HEK293 (cell line): ENCODE measurements at regions of chr19 and their contacts with region 1.

Region 1: DNA sequence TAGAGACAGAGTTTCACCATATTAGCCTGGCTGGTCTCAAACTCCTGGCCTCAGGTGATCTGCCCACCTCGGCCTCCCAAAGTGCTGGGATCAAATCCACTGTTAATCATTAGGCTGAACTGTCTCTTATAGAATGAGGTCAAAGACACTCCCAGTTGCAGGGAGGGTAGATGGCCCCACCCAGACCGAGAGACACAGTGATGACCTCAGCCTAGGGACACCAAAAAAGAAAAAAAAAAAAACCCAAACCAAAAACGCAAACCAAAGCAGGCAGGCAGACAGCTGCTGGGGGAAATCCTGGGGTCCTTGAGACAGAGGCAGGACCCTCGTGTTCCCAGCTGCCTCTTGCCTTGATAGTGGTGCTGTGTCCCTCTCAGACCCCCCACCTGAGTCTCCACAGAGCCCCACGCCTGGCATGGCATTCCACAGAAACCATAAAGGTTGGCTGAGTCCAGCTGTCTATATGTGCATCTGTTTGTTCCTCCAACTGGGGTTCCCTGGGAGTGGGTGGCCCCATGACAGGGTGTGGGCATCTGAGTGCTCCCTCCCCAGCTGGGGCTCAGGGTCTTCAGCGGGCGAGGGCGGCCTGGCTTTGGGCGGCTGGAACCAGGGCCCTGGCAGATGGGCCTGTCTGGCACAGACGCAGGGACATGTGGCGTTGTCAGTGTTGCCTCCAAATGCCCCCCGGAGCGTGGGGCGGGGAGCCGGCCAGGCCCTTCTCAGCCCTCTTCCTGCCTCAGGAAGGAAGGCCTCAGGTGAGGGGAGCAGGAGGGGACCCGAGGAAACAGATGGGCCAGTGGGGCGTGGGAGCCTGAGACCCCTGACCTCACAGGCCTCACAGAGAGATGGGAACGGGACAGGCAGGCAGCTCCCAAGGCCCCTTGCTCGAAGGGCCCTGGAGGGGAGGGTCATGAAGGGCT is 5.2 kb downstream of the DAND5 start:
- H3K4me3 ChIP-seq: no peak overlapping the region
- H3K27ac ChIP-seq: no peak overlapping the region
- H3K4me1 ChIP-seq: no peaks in the 10 kb centered on the region
- CTCF ChIP-seq: no peak

Region 2: DNA sequence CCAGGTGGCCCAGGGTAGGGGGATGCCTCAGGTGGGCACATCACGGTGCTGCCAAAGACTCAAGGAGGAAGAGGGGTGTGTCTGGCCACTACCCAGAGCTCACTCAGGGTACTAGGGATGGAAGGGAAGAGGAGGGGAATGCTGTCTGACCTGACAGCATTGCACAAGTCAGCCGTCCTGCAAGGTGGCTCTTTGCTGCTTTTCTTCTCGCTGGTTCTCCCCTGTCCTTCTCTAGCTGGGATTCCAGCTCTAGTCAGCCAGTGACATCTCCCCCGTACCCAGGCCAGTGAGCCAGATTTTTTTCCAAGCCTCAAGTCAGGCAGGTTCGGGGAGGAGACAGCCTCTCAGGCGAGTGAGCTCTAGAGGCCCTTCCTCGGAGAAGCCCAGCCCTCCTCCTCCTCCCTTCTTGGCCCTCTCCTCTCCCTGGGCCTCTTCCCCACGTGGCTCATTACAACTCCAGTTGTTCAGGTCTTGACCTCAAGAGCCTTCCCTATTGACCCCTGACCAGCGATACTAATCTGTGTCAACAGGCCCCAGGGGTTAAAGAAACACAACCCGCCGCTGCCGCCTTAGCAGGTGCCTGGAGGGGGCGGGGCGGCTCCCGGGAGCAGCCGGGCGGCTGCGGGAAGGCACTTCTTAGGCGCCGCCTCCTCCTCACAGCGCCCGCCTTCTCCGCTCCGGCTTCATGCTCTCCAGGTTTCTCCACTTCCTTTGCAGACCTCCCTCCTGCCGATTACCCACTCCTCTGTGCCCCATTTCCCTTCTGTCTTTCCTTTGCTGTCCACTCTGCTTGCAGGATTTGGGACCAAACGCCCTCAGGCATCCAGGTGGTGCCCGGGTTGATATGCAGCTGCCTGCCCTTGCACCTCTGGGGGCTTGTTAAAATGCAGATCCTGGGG is 77.0 kb after region 1 on chr19:
- CTCF ChIA-PET with region 1: interaction called, 20 read pairs
- POLR2A ChIA-PET with region 1: interaction called, 3 read pairs
- H3K4me3 ChIP-seq: peak overlapping the region; percentile 6; the same call in 1 of the 2 replicates
- H3K27ac ChIP-seq: no peak overlapping the region; the same call in 1 of the 2 replicates
- H3K4me1 ChIP-seq: peaks cover 32% of the 10 kb centered on the region
- CTCF ChIP-seq: no peak

Region 3: GRCh38 chr19:13069415-13070359 is 95.1 kb after region 1 on chr19:
- CTCF ChIA-PET with region 1: interaction called, 13 read pairs
- POLR2A ChIA-PET with region 1: no interaction called
- H3K4me3 ChIP-seq: no peak overlapping the region
- H3K27ac ChIP-seq: no peak overlapping the region
- H3K4me1 ChIP-seq: no peaks in the 10 kb centered on the region; the same call in 1 of the 2 replicates
- CTCF ChIP-seq: no peak

Region 4: DNA sequence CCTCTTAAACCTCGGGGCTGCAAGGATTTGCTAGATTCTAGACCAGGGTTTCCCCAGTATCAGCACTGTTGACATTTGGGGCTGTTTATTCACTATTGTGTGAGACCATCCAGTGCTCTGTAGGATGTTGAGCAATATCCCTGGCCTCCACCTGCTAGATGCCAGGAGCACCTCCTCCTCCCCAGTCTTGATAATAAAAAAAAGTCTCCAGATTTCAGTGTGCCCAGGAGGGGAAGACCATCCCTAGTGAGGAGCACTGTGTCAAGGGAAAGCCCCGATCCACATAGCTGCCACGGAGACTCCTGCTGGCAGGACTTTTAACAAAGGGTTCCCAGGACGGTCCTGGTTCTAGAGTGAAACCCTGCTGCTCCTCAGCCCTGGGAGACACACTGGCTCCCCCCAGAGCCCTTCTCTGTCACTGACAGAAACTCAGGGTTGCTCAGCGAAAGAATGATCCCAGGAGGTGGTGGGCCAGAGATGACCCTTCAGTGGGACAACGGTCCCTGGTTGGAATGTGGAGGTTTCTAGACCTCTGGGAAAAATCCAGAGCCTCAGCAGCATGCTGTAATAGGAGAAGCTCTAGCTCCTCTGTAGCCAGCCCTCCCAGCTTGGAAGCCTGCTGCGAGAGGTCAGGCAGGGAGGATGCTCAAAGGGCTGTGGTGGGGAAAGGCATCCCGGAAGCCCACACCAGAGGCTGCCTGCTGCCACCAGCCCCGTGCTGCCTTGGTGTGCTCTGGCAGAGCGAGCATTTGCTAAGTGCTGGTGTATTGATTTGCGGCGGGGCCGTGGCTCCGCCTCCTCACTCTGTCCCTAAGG is 107.8 kb after region 1 on chr19:
- CTCF ChIA-PET with region 1: interaction called, 14 read pairs
- POLR2A ChIA-PET with region 1: no interaction called
- H3K4me3 ChIP-seq: no peak overlapping the region
- H3K27ac ChIP-seq: no peak overlapping the region
- H3K4me1 ChIP-seq: peaks cover 14% of the 10 kb centered on the region
- CTCF ChIP-seq: peak; percentile 18; the same call in 1 of the 2 replicates